ENCODE measurements at regions of chr21 and their contacts with region 1.

Region 1: GRCh38 chr21:36989699-36990507 is 16.6 kb upstream of the RIPPLY3 start:
- DNase-seq: peak; percentile 86
- H3K4me3 Mint-ChIP-seq: peak overlapping the region; percentile 85
- H3K27ac Mint-ChIP-seq: peak overlapping the region; percentile 92
- H3K4me1 Mint-ChIP-seq: peaks cover 49% of the 10 kb centered on the region
- H3K27me3 Mint-ChIP-seq: no peaks in the 10 kb centered on the region

Region 2: DNA sequence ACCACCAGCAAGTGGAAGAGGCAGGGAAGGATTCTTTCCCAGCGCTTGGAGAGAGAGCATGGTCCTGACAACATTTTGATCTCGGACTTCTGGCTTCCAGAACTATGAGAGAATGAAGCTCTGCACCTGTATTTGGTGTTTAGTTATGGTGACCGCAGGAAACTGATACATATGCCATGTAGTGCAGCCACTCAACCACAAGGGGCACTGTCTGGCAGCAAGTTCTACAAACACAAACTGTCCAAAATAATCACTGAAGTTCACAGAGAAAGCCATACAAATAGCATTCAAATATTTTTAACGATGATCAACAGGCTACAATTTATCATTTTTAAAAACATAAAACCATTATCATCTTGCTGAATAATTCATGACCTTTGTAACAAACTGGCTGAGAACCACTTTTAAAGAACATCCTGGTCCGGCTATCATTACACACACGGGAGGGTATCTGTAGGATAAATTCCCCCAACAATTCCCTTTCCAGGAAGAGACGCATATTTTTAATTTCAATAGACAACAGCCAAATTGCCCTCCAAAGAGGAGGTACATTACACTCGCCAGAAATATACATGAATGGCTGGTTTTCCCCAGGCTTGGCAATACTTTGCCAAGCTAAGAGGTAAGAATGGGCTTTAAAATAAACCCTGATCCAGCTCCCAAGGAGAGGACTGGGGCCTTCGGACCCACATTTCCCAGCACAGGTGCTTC is 864.2 kb before region 1 on chr21:
- CTCF ChIA-PET with region 1: no interaction called
- POLR2A ChIA-PET with region 1: no interaction called
- DNase-seq: peak; percentile 69
- H3K4me3 Mint-ChIP-seq: no peak overlapping the region
- H3K27ac Mint-ChIP-seq: no peak overlapping the region
- H3K4me1 Mint-ChIP-seq: peaks cover 26% of the 10 kb centered on the region
- H3K27me3 Mint-ChIP-seq: peaks cover 6% of the 10 kb centered on the region

Region 3: DNA sequence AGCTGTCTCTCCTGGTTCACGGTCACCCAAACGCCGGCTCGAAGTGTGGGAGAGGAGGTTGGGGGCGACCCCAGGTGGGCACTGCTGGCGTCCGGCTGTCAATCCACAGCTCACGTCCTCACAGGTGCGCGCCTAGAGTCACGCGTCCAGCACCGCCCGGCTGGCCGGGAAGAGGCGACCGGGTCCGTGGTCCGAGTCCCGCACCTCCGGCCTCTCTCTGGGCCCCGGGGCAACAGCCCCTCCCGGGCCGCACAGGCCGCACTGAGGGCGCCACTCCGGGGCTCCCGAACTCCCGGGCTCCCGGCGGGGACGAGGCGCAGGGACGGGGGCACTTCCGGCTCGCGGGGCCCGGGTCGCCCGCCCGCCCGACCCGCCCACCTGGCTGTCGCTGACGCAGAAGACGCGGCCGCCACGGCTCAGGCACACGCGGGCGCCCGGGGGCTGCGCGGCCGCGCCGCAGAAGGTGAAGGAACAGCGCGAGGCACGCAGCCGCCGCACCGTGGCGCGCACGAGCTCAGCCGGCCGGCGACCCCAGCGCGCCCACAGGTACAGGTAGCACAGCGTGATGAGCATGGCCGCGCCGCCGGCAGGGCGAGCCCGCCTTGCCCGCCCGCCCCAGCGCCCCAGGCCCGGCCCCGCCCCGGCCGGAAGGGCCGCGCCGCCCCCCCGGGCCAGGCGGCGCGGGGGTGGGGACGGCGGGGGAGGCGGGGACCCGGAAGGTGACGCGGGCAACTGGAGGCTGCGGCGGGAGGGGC is 23.7 kb before region 1 on chr21 and contains the start of gene HLCS:
- CTCF ChIA-PET with region 1: interaction called, 13 read pairs
- POLR2A ChIA-PET with region 1: no interaction called
- DNase-seq: peak; percentile 71
- H3K4me3 Mint-ChIP-seq: peak within 1 kb of the TSS; percentile 80
- H3K27ac Mint-ChIP-seq: peak within 1 kb of the TSS; percentile 88
- H3K4me1 Mint-ChIP-seq: peaks cover 22% of the 10 kb centered on the region
- H3K27me3 Mint-ChIP-seq: no peaks in the 10 kb centered on the region
- total RNA-seq, gene HLCS: 15.8 to 15.9 TPM

Region 4: GRCh38 chr21:37045149-37045548 is 55.2 kb after region 1 on chr21:
- CTCF ChIA-PET with region 1: no interaction called
- POLR2A ChIA-PET with region 1: no interaction called
- DNase-seq: peak; percentile 54
- H3K4me3 Mint-ChIP-seq: no peak overlapping the region
- H3K27ac Mint-ChIP-seq: peak overlapping the region; percentile 1
- H3K4me1 Mint-ChIP-seq: peaks cover 15% of the 10 kb centered on the region
- H3K27me3 Mint-ChIP-seq: peaks cover 21% of the 10 kb centered on the region

Measured in activated CD4-positive, alpha-beta T cell treated with anti-CD3 and anti-CD28 coated beads, Interleukin-2, amount 10 ng/mL, durations not matched to agents 7 days and 5 days (primary cell).